ENCODE measurements at regions of chr3 and their contacts with region 1.

Region 1: GRCh38 chr3:158727206-158728060 is 4.8 kb downstream of the RARRES1 start:
- DNase-seq: peak; percentile 67
- ATAC-seq: peak; percentile 67
- H3K4me3 Mint-ChIP-seq: no peak overlapping the region
- H3K27ac Mint-ChIP-seq: no peak overlapping the region
- H3K4me1 Mint-ChIP-seq: peaks cover 27% of the 10 kb centered on the region
- H3K27me3 Mint-ChIP-seq: peaks cover 2% of the 10 kb centered on the region
- CTCF ChIP-seq: peak; percentile 70

Region 2: DNA sequence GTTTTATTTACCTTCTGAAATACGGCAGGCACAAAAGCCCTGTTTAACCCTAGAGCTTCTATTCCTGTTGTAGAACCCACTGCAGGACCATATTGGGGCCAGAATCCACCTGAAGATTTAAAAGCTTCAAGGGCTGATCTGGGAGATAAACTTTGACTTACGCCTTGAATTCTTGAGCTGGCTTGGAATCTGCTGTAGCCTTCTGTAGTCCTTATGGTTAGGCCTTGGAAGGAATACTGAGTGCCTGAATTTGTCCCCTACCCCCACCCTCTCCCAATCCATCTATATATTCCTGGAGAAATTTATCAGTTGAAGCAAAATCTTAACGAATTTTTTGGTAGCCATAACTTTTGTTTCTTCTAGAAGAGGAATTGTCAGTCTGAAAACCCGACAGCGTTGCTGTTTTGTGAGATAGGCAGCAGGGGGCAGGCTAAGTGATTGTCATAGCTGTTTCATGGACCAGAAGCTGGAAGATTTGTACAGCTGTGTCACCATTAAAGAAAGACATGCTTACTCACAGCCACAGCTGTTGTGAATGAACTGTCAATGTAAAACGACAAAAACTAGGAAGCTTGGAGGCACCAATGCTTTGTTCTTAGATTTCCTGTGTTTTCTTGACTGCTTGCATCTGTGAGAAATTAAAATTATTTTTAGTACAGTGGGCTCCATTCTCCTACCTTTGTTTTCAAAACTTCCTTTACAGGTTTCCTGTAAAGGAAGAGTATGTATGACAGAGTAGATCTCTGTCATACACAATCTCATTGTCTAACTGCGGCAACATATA is 67.8 kb before region 1 on chr3:
- CTCF ChIA-PET with region 1: interaction called, 13 read pairs
- POLR2A ChIA-PET with region 1: no interaction called
- intact Hi-C with region 1: no loop called
- DNase-seq: peak; percentile 65
- ATAC-seq: peak; percentile 93
- H3K4me3 Mint-ChIP-seq: no peak overlapping the region
- H3K27ac Mint-ChIP-seq: no peak overlapping the region
- H3K4me1 Mint-ChIP-seq: peaks cover 13% of the 10 kb centered on the region
- H3K27me3 Mint-ChIP-seq: no peaks in the 10 kb centered on the region
- CTCF ChIP-seq: peak; percentile 60

Region 3: DNA sequence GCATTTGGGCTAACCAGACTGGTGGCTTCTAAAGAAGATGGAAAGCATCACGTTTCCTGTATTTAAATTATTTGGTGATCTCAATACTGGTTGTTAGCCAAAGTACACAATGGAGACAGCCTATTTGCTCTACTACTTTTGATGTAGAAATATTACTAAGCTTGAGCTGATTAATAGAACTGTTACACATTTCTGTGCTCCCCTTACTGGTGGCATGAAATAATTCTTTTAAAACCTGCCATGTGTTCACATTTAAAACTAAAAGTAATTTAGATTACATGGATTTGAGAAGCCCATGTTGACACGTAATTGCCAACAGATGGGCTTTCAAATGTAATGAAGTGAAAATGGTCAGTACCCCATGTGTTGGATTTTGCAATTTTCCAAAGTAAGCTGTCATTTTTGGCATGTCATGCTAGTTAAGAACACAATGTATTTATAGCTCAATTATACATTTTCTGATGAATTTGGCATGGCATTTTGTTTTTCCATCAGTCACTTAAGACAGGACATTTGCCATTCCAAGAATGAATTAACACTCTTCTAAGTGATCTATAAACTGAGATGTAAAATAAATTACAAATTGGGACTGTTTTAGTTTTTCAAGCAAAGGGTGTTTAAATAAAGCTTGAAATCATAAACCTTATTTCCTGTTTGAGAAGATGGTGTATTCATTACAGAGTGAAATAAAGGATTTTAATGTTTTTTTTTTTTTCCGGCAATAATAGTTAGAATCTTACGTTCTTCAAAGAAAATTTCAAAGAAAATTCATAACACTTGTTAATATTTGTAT is 15.6 kb after region 1 on chr3:
- CTCF ChIA-PET with region 1: interaction called, 23 read pairs
- POLR2A ChIA-PET with region 1: no interaction called
- intact Hi-C with region 1: no loop called
- DNase-seq: no peak
- ATAC-seq: no peak
- H3K4me3 Mint-ChIP-seq: no peak overlapping the region
- H3K27ac Mint-ChIP-seq: no peak overlapping the region
- H3K4me1 Mint-ChIP-seq: peaks cover 4% of the 10 kb centered on the region
- H3K27me3 Mint-ChIP-seq: no peaks in the 10 kb centered on the region
- CTCF ChIP-seq: no peak

Region 4: DNA sequence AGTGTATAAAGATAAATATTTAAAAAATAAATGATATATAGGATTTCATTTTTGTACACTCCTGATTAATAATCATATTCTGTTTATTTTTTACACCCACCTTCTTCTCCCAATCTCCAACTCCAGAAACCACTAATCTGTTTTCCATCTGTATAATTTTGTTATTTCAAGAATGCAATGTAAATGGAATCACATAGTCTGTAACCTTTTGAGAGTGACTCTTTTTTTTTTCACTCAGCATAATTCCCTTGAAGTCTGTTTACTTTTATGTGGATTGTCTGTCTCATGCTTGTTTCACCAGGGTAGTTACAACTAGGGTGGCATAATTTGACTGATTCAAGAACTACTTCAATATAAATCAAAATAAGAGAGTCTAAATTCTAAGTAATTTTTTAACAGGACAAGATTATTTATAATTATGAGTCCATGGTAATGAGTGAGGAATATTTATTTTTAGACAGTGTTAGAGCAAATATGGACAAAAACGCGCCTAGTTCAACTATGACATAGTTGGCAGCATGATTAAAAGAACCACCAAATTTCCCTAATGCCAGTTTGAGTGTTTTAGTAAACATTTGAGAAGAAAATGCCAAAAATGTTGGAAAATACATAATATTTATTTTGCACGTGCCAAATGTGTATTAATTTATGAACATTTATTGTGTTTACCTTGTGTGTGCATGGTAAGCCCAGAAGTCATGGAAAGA is 55.0 kb after region 1 on chr3:
- CTCF ChIA-PET with region 1: interaction called, 18 read pairs
- POLR2A ChIA-PET with region 1: no interaction called
- intact Hi-C with region 1: no loop called
- DNase-seq: no peak
- ATAC-seq: no peak
- H3K4me3 Mint-ChIP-seq: no peak overlapping the region
- H3K27ac Mint-ChIP-seq: no peak overlapping the region
- H3K4me1 Mint-ChIP-seq: no peaks in the 10 kb centered on the region
- H3K27me3 Mint-ChIP-seq: no peaks in the 10 kb centered on the region
- CTCF ChIP-seq: no peak

Region 5: DNA sequence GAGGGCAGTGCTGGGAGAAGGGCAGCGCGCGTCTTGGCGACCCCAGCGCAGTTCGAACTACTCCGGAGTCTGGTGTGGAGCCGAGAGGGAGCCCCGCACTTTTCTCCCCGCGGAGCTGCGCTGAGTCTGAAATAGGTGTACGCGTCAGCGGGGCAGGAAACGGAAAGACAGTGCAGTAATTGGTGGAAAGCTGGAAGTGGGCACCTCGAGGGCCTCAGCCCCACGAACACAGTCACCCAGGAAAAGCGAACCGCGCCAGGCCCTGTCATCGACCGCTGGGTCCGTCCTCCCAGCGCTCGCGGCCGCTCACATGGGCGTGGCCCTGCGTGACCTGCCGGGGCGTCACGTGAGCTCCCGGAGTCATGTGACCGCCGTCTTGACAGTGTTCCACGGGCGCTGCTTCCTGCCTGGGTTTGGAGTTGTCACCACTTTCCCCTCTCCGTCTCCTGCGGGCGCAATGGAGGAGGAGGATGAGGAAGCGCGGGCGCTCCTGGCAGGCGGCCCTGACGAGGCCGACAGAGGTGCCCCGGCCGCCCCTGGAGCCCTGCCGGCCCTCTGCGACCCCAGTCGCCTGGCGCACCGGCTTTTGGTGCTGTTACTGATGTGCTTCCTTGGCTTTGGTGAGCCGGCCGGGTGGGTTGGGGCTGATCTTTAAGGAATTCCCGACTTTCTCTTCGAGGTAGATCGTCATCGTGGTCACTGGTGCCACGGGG is 74.4 kb after region 1 on chr3 and contains the start of gene MFSD1:
- CTCF ChIA-PET with region 1: interaction called, 31 read pairs
- POLR2A ChIA-PET with region 1: no interaction called
- intact Hi-C with region 1: no loop called
- DNase-seq: peak; percentile 94
- ATAC-seq: peak; percentile 94
- H3K4me3 Mint-ChIP-seq: peak within 1 kb of the TSS; percentile 83
- H3K27ac Mint-ChIP-seq: peak within 1 kb of the TSS; percentile 66
- H3K4me1 Mint-ChIP-seq: peaks cover 20% of the 10 kb centered on the region
- H3K27me3 Mint-ChIP-seq: no peaks in the 10 kb centered on the region
- CTCF ChIP-seq: no peak
- total RNA-seq, gene MFSD1: 9.2 to 9.7 TPM

Measured in activated CD8-positive, alpha-beta T cell treated with anti-CD3 and anti-CD28 coated beads for 36 hours (primary cell).